Naive thymus-derived CD4-positive, alpha-beta T cell (primary cell): ENCODE measurements at regions of chr1 and their contacts with region 1.

Region 1: GRCh38 chr1:28259307-28260167 is at the start of gene SESN2:
- DNase-seq: peak; percentile 97 to 99 (median 99)
- ATAC-seq: peak; percentile 98
- H3K4me3 ChIP-seq: peak within 1 kb of the TSS; percentile 95
- H3K4me3 Mint-ChIP-seq: peak within 1 kb of the TSS; percentile 65 to 90 (median 82)
- H3K27ac ChIP-seq: peak within 1 kb of the TSS; percentile 77
- H3K27ac Mint-ChIP-seq: peak within 1 kb of the TSS; percentile 58 to 96 (median 74)
- H3K4me1 ChIP-seq: peaks cover 38 to 47% of the 10 kb centered on the region in 2 donors
- H3K4me1 Mint-ChIP-seq: peaks cover 32 to 54% (median 49%) of the 10 kb centered on the region in 7 donors
- H3K27me3 ChIP-seq: no peaks in the 10 kb centered on the region
- H3K27me3 Mint-ChIP-seq: peaks cover 0 to 2% (median 0%) of the 10 kb centered on the region in 5 donors
- total RNA-seq, gene SESN2: 4.5 to 50.7 (median 11.8) TPM

Region 2: DNA sequence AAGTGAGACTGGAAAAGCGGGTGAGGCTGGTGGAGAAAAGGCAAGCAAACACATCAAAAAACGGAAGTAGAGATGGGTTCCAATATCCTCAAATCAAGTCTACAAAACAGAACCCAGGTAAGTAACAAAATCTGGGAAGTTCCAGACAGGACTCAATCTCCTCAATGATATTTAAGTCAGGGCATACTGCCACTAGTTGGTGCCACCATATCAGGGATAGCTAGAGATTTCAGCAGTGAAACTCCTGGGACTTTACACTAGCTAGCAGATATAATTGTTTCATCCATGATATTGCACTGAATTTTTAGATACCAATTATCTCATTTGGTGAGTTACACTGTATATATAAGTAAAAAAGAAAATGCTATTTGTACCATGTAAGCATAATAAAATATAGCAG is 223.1 kb before region 1 on chr1:
- CTCF ChIA-PET with region 1: no interaction called
- POLR2A ChIA-PET with region 1: no interaction called
- intact Hi-C with region 1: no loop called
- DNase-seq: no peak
- ATAC-seq: no peak
- H3K4me3 ChIP-seq: no peak overlapping the region
- H3K4me3 Mint-ChIP-seq: no peak overlapping the region
- H3K27ac ChIP-seq: no peak overlapping the region
- H3K27ac Mint-ChIP-seq: peak overlapping the region in 2 of 9 donors; percentile 4 to 18
- H3K4me1 ChIP-seq: no peaks in the 10 kb centered on the region
- H3K4me1 Mint-ChIP-seq: peaks cover 0 to 5% (median 0%) of the 10 kb centered on the region in 7 donors
- H3K27me3 ChIP-seq: no peaks in the 10 kb centered on the region
- H3K27me3 Mint-ChIP-seq: no peaks in the 10 kb centered on the region

Region 3: DNA sequence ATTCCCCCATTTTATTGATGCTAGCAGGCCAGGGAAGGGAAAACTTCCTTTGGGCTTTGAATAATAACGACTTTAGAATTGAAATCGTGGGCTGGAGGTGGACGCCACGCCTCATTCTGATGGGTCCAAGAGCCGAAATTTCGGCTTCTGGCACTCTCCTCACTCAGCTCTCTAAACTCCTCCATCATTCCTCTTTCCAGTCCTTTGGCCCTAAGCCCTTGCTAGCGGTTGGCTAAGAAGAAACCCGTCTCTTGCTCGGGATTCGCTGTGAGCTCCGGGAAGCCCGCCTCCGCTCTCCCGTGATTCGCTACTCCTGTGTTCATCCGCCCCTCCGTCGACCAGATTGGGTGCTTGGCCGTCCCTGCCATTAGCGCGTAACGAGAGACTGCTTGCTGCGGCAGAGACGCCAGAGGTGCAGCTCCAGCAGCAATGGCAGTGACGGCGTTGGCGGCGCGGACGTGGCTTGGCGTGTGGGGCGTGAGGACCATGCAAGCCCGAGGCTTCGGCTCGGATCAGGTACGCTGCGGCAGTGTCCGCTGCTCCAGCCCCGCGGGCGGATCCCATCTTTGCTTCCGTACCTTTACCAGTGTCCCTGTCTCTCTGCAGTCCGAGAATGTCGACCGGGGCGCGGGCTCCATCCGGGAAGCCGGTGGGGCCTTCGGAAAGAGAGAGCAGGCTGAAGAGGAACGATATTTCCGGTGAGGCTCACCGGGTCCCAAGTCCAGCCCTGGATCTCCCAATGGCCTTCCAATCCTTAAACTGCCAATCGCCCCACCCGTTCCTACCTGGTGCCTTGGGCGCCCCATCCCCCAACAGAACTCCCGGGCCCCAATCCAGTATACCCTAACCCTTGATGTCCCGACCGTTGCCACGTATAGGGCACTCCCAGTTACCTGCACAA is 23.5 kb before region 1 on chr1 and contains the start of gene ATP5IF1:
- CTCF ChIA-PET with region 1: no interaction called
- POLR2A ChIA-PET with region 1: interaction called, 8 read pairs
- intact Hi-C with region 1: loop called in 1 of 2 experiments (anchors 1 kb)
- DNase-seq: peak; percentile 78 to 96 (median 94)
- ATAC-seq: peak; percentile 97
- H3K4me3 ChIP-seq: peak within 1 kb of the TSS; percentile 95
- H3K4me3 Mint-ChIP-seq: peak within 1 kb of the TSS in 2 of 10 donors; percentile 5 to 48
- H3K27ac ChIP-seq: peak within 1 kb of the TSS; percentile 87
- H3K27ac Mint-ChIP-seq: no peak within 1 kb of the TSS
- H3K4me1 ChIP-seq: peaks cover 26 to 34% of the 10 kb centered on the region in 2 donors
- H3K4me1 Mint-ChIP-seq: peaks cover 7 to 33% (median 20%) of the 10 kb centered on the region in 7 donors
- H3K27me3 ChIP-seq: no peaks in the 10 kb centered on the region
- H3K27me3 Mint-ChIP-seq: no peaks in the 10 kb centered on the region
- total RNA-seq, gene ATP5IF1: 68.2 to 158 (median 104) TPM

Region 4: DNA sequence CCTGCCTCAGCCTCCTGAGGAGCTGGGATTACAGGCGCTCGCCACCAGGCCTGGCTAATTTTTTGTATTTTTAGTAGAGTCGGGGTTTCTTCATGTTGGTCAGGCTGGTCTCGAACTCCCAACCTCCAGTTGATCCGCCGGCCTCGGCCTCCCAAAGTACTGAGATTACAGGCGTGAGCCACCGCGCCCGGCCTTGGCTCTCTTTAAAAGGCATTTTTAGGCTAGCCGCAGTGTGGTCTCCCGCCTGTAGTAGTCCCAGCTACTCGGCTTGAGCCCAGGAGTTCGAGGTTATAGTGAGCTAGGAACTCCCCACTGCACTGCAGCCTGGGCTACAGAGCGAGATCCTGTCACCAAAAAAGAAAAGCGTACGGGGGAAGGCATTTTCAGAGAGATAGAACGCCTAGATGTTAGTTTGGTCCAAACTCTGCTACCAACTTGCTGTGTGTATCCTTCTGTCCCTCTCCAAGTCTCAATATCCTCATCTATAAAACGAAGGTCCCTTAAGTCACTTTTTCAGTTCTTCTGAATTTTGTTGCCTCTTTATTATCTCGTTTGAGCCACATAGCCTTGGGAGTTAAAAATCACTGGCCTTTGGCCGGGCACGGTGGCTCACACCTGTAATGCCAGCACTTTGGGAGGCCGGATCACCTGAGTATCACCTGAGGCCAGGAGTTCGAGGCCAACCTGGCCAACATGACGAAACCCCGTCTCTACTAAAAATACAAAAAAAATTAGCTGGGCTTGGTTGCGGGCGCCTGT is 70.0 kb after region 1 on chr1:
- CTCF ChIA-PET with region 1: no interaction called
- POLR2A ChIA-PET with region 1: interaction called, 18 read pairs
- intact Hi-C with region 1: loop called (anchors 1 kb)
- DNase-seq: peak in 2 of 9 donors; percentile 32 to 48
- ATAC-seq: peak; percentile 14
- H3K4me3 ChIP-seq: peak overlapping the region; percentile 59
- H3K4me3 Mint-ChIP-seq: peak overlapping the region; percentile 89 to 98 (median 92)
- H3K27ac ChIP-seq: peak overlapping the region; percentile 86
- H3K27ac Mint-ChIP-seq: peak overlapping the region; percentile 92 to 100 (median 98)
- H3K4me1 ChIP-seq: peaks cover 13 to 14% of the 10 kb centered on the region in 2 donors
- H3K4me1 Mint-ChIP-seq: peaks cover 20 to 40% (median 39%) of the 10 kb centered on the region in 7 donors
- H3K27me3 ChIP-seq: no peaks in the 10 kb centered on the region
- H3K27me3 Mint-ChIP-seq: peaks cover 0 to 3% (median 0%) of the 10 kb centered on the region in 5 donors

Region 5: GRCh38 chr1:28369371-28370238 is 110.1 kb after region 1 on chr1 and contains the start of gene PHACTR4:
- CTCF ChIA-PET with region 1: no interaction called
- POLR2A ChIA-PET with region 1: interaction called, 4 read pairs
- intact Hi-C with region 1: loop called (anchors 1 kb)
- DNase-seq: peak; percentile 54 to 81 (median 66)
- ATAC-seq: peak; percentile 96
- H3K4me3 ChIP-seq: peak within 1 kb of the TSS; percentile 74
- H3K4me3 Mint-ChIP-seq: peak within 1 kb of the TSS; percentile 82 to 98 (median 94)
- H3K27ac ChIP-seq: peak within 1 kb of the TSS; percentile 79
- H3K27ac Mint-ChIP-seq: peak within 1 kb of the TSS; percentile 88 to 99 (median 91)
- H3K4me1 ChIP-seq: peaks cover 10 to 11% of the 10 kb centered on the region in 2 donors
- H3K4me1 Mint-ChIP-seq: peaks cover 11 to 40% (median 35%) of the 10 kb centered on the region in 7 donors
- H3K27me3 ChIP-seq: no peaks in the 10 kb centered on the region
- H3K27me3 Mint-ChIP-seq: peaks cover 0 to 2% (median 0%) of the 10 kb centered on the region in 5 donors
- total RNA-seq, gene PHACTR4: 19.8 to 29.0 (median 25.7) TPM